Left lung (tissue), 14 donors: ENCODE measurements at regions of chr17 and their contacts with region 1.

Region 1: DNA sequence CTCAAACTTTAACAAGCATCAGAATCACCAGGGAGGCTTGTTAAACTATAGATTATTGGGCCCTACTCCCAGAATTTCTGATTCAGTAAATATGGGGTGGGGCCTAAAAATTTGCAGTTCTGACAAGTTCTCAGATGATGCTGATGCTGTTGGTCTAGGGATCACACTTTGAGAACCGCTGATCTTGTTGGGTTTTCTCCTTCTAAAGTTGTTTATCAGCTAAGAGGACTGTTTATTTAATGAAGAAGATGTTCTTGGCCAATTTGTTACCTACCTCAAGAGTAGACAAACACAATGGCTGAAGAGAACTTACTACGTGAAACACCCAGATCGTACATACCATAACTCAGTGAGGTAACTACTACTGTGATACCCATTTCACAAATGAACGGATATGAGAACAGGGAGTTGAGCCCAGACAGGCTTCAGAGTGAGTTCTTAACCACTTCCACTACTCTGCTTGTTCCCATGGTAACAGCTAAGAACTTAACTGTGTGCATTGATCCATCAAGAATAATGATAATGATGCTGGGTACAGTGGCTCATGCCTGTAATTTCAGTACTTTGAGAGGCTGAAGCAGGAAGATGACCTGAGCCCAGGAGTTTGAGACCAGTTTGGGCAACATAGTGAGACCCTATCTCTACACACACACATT is 85.3 kb upstream of the NSRP1 start:
- DNase-seq: no peak
- ATAC-seq: no peak
- H3K4me3 ChIP-seq: no peak overlapping the region
- H3K27ac ChIP-seq: no peak overlapping the region
- H3K4me1 ChIP-seq: no peaks in the 10 kb centered on the region
- H3K27me3 ChIP-seq: no peaks in the 10 kb centered on the region
- CTCF ChIP-seq: no peak

Region 2: DNA sequence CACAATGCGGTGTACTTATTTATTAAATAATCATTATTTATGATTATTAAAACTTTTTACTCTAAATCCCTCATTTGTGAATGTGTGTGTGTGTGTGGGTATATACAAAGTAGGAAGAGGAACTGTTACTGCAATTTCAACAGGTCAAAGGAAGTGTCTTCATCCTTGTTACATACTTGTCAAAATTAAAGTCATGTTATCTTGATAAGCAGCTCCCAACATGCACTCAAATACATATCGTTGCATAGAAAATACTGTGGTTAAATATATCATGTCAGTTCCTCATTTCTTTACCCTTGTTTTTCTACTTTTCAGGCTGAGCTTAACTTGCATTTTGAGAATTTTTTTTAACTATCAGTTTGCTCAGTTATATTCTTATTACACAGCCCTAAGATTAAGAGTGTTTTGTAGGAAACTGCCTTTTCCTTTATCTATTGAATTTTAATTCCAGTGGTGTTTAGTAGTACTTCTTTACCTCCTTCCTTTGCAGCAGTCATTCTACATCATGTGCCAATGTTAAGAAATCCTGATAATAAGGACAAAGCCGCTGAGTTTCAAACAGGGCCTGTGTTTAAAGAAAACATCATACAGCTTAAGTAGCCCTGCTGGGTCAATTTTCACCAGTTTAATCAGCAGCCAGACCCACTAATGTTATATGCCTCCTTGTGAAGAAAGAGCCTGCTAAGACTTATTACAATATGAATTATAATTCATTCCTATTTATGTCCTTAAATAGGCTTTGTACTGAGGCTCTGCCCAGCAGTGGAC is 82.7 kb before region 1 on chr17:
- intact Hi-C with region 1: no loop called
- DNase-seq: no peak
- ATAC-seq: no peak
- H3K4me3 ChIP-seq: no peak overlapping the region
- H3K27ac ChIP-seq: peak overlapping the region in 1 of 2 donors; percentile 35
- H3K4me1 ChIP-seq: peaks cover 0 to 6% of the 10 kb centered on the region in 2 donors
- H3K27me3 ChIP-seq: no peaks in the 10 kb centered on the region
- CTCF ChIP-seq: no peak

Region 3: GRCh38 chr17:30093463-30094147 is 62.3 kb after region 1 on chr17:
- intact Hi-C with region 1: loop called in 1 of 2 experiments (anchors 5 kb)
- DNase-seq: peak in 2 of 4 donors; percentile 61 to 67
- ATAC-seq: peak; percentile 86
- H3K4me3 ChIP-seq: no peak overlapping the region
- H3K27ac ChIP-seq: no peak overlapping the region
- H3K4me1 ChIP-seq: peaks cover 0 to 9% of the 10 kb centered on the region in 2 donors
- H3K27me3 ChIP-seq: peaks cover 0 to 6% of the 10 kb centered on the region in 2 donors
- CTCF ChIP-seq: peak; percentile 73 to 78

Region 4: DNA sequence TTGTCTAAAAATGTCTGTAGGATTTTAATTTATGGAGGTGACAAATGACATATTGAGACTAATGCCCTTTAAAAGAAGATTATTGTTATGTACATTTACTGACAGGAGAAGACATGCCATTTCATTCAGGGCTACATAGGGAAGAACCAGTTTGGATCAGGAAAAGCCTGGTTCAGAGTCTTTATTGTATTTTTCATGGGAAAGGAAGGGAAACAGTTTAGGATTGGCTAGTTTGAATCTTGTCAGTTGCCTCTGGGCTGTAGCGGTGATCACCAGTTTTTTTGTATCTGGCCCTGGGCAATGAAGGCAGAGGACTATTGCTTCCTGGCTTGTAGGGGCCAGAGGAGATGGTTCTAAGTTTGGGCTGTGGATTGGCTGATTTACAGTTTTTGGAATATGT is 117.0 kb after region 1 on chr17:
- intact Hi-C with region 1: no loop called
- DNase-seq: no peak
- ATAC-seq: no peak
- H3K4me3 ChIP-seq: no peak overlapping the region
- H3K27ac ChIP-seq: no peak overlapping the region
- H3K4me1 ChIP-seq: no peaks in the 10 kb centered on the region
- H3K27me3 ChIP-seq: no peaks in the 10 kb centered on the region
- CTCF ChIP-seq: no peak